Psoas muscle (tissue), 8 donors: ENCODE measurements at regions of chr15 and their contacts with region 1.

Region 1: GRCh38 chr15:22845289-22845900 is 6.9 kb downstream of the NIPA2 start:
- DNase-seq: no peak
- ATAC-seq: peak; percentile 75 to 91 (median 82)
- H3K4me3 ChIP-seq: peak overlapping the region; percentile 23
- H3K27ac ChIP-seq: peak overlapping the region; percentile 64
- H3K4me1 ChIP-seq: peaks cover 23% of the 10 kb centered on the region
- H3K27me3 ChIP-seq: no peaks in the 10 kb centered on the region
- CTCF ChIP-seq: no peak

Region 2: GRCh38 chr15:22887157-22887951 is 42.0 kb after region 1 on chr15:
- intact Hi-C with region 1: loop called in 1 of 2 experiments (anchors 2 kb)
- DNase-seq: peak; percentile 69 to 88
- ATAC-seq: peak; percentile 85 to 92 (median 91)
- H3K4me3 ChIP-seq: no peak overlapping the region
- H3K27ac ChIP-seq: peak overlapping the region; percentile 73
- H3K4me1 ChIP-seq: peaks cover 5% of the 10 kb centered on the region
- H3K27me3 ChIP-seq: no peaks in the 10 kb centered on the region
- CTCF ChIP-seq: no peak

Region 3: GRCh38 chr15:23052511-23052910 is 207.1 kb after region 1 on chr15:
- intact Hi-C with region 1: no loop called
- DNase-seq: no peak
- ATAC-seq: no peak
- H3K4me3 ChIP-seq: no peak overlapping the region
- H3K27ac ChIP-seq: no peak overlapping the region
- H3K4me1 ChIP-seq: no peaks in the 10 kb centered on the region
- H3K27me3 ChIP-seq: no peaks in the 10 kb centered on the region
- CTCF ChIP-seq: no peak